Activated CD4-positive, alpha-beta memory T cell treated with anti-CD3 and anti-CD28 coated beads, Interleukin-2, amount 10 ng/mL, durations not matched to agents 7 days and 5 days (primary cell): ENCODE measurements at regions of chr19 and their contacts with region 1.

Region 1: DNA sequence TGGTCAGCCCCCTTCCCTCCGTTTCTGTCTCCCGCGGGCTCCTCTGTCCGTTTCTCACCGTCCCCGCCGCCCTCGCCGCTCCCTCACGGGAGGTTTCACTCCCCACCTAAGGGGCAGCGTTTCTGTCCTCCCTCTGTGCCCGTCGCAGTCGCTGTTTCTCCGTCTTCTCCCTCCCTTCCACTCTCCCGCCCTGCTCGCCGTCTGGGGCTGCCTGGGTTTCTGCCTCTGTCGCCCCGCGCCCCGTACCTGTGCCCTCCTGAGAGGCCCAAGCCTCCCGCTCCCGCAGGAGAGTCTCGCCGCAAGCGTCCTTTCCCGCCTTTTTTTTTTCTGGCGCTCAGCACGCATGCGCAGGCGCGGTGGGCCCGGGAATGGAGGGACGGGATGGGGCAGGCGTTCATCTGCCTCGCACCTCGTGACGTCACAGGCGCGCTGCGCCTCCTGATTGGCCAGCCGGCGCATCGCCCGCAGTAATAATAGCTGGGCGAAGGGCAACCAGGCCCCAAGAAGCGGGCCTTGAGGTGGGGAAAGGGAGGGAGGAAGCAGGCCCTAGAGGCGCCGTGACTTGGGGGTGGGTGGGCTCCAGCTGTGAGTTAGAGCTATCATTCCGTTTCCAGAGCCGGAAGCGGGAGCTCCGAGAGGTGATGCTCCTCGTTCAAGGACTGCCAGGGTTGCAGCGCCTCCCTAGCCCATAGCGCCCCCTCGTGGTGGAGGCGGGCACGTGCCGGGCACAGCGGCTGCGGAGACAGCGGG is 15.4 kb downstream of the SSC5D start:
- DNase-seq: peak; percentile 93
- H3K4me3 Mint-ChIP-seq: peak overlapping the region; percentile 72
- H3K27ac Mint-ChIP-seq: peak overlapping the region; percentile 64
- H3K4me1 Mint-ChIP-seq: peaks cover 28% of the 10 kb centered on the region
- H3K27me3 Mint-ChIP-seq: peaks cover 10% of the 10 kb centered on the region

Region 2: GRCh38 chr19:55141696-55142095 is 362.0 kb before region 1 on chr19:
- CTCF ChIA-PET with region 1: interaction called, 31 read pairs
- POLR2A ChIA-PET with region 1: no interaction called
- DNase-seq: no peak
- H3K4me3 Mint-ChIP-seq: no peak overlapping the region
- H3K27ac Mint-ChIP-seq: no peak overlapping the region
- H3K4me1 Mint-ChIP-seq: peaks cover 9% of the 10 kb centered on the region
- H3K27me3 Mint-ChIP-seq: peaks cover 25% of the 10 kb centered on the region

Region 3: DNA sequence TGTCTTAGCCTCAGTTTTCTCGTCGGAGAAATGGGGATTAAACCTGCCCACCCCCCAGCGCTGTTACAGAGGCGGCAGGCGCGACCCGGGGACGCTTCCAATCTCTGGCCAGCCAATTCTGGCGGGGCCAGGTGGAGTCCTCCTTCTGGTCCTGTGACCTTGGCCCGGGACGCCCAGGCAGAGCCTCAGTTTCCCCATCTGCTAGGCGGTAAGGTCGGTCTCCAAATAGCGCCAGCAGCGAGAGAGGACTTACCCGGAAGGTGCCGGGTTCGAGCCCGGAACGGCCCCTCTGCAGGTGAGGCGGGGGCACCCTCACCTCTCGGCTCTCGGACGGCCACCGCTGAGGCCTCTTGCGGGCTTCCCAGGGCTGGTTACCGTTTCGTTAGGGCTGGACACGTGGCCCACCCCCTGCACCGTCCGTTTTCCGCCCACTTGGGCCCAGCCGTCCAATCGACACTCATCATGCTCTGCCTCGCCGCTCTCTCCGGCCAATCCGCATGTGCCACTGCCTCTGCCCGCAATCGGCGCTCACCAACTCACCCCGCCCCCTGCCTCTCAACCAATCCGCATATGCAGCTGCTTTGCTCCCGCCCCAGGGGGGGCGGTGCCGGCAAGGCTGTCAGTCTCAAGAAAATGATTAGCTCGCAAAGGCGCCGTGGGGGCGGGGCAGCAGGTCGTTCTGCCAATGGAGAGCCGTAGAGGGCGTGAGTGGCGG is 42.3 kb before region 1 on chr19 and contains the start of gene ISOC2:
- CTCF ChIA-PET with region 1: interaction called, 63 read pairs
- POLR2A ChIA-PET with region 1: interaction called, 4 read pairs
- DNase-seq: peak; percentile 100
- H3K4me3 Mint-ChIP-seq: peak within 1 kb of the TSS; percentile 81
- H3K27ac Mint-ChIP-seq: peak within 1 kb of the TSS; percentile 44
- H3K4me1 Mint-ChIP-seq: peaks cover 23% of the 10 kb centered on the region
- H3K27me3 Mint-ChIP-seq: peaks cover 2% of the 10 kb centered on the region
- total RNA-seq, gene ISOC2: 14.5 to 16.7 TPM

Region 4: DNA sequence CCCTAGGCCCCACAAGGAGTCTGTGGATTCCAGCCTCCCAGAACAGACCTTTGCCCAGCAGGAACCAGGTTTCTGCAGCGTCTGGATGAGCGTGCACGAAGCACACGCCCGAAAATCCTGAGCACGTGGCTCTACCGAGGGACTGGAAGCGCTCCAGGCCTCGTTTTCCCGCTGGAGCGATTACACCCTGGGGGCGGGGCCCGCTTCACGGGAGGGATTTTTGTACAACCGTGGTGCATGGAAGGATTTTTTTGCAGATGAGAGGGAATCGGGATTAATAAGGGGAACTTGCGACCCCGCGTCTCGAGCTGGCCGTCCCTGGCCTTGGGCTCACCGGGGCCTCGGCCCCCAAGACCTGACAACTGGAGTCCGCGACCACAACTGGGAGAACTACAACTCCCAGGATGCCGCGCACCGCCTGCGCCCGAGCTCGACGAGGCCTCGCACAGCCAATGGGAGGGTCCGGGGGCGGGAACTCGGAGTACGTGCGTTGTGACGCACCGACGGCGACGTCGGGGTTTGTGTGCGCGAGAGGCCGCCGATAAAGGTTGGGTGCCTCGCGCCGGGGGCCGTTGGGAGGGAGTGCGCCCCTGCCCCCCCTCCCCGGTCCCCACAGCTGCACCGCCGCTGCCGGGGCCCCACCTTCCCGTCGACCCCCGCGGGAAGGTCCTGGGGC is 27.4 kb before region 1 on chr19 and contains the start of gene ZNF628:
- CTCF ChIA-PET with region 1: interaction called, 38 read pairs
- POLR2A ChIA-PET with region 1: interaction called, 8 read pairs
- DNase-seq: peak; percentile 98
- H3K4me3 Mint-ChIP-seq: peak within 1 kb of the TSS; percentile 90
- H3K27ac Mint-ChIP-seq: peak within 1 kb of the TSS; percentile 86
- H3K4me1 Mint-ChIP-seq: peaks cover 36% of the 10 kb centered on the region
- H3K27me3 Mint-ChIP-seq: no peaks in the 10 kb centered on the region
- total RNA-seq, gene ZNF628: 6.7 to 9.1 TPM

Region 5: GRCh38 chr19:55516878-55517620 is 13.4 kb after region 1 on chr19:
- CTCF ChIA-PET with region 1: interaction called, 14 read pairs
- POLR2A ChIA-PET with region 1: interaction called, 3 read pairs
- DNase-seq: peak; percentile 90
- H3K4me3 Mint-ChIP-seq: peak overlapping the region; percentile 57
- H3K27ac Mint-ChIP-seq: peak overlapping the region; percentile 59
- H3K4me1 Mint-ChIP-seq: peaks cover 5% of the 10 kb centered on the region
- H3K27me3 Mint-ChIP-seq: peaks cover 9% of the 10 kb centered on the region

Region 6: GRCh38 chr19:55580628-55581144 is 77.0 kb after region 1 on chr19 and contains the start of gene ZNF579:
- CTCF ChIA-PET with region 1: no interaction called
- POLR2A ChIA-PET with region 1: no interaction called
- DNase-seq: peak; percentile 75
- H3K4me3 Mint-ChIP-seq: peak within 1 kb of the TSS; percentile 84
- H3K27ac Mint-ChIP-seq: peak within 1 kb of the TSS; percentile 71
- H3K4me1 Mint-ChIP-seq: peaks cover 25% of the 10 kb centered on the region
- H3K27me3 Mint-ChIP-seq: peaks cover 13% of the 10 kb centered on the region
- total RNA-seq, gene ZNF579: 6.4 to 6.6 TPM

Region 7: DNA sequence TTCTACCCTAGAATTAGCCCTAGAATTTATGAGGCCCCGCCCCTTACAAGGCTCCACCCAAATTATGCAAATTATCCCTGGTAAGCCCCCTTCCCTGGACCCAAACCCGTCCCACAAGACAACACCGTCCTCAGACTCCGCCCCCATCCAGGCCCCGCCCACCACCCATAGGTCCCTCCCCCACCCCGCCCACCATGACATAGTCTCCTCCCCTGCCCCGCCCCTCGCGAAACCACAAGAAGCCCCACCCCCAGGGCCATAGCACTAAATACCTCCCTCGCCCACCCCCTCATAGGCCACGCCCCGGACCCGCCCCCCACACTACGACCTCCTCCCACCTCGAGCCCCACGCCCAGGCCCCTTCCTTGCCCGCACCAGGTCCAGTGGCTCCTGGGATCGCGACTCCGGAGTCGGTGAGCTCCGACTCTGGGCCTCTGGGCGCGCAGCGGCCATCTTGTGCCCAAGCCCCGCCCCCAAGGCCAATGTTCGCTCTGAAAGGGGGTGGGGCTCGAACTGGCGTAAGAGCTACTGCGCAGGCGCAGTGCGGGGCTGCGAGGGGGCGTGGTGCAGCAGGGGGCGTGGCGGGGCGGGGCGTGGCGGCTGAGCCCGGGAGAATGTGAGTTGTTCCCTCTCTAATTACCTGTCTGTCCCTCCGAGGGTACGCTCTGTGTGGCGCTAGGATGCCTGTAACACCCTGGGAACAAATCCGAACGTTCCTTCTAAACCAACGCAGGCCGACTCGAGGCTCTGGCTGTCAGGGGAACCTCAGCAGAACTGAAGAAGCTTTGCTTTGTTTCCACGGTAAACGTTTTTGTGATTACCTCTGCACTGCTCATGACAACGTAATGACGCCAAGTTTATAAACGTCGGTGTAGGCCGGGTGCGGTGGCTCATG is 120.7 kb after region 1 on chr19 and contains the start of gene ZNF784:
- CTCF ChIA-PET with region 1: interaction called, 40 read pairs
- POLR2A ChIA-PET with region 1: interaction called, 4 read pairs
- DNase-seq: peak; percentile 94
- H3K4me3 Mint-ChIP-seq: peak within 1 kb of the TSS; percentile 78
- H3K27ac Mint-ChIP-seq: peak within 1 kb of the TSS; percentile 93
- H3K4me1 Mint-ChIP-seq: peaks cover 50% of the 10 kb centered on the region
- H3K27me3 Mint-ChIP-seq: peaks cover 7% of the 10 kb centered on the region
- total RNA-seq, gene ZNF784: 6.4 to 7.4 TPM